GM12878 (cell line): ENCODE measurements at regions of chr10 and their contacts with region 1.

Region 1: GRCh38 chr10:74831518-74832120 is 5.2 kb downstream of the KAT6B start:
- DNase-seq: no peak
- ATAC-seq: no peak
- H3K4me3 ChIP-seq: peak overlapping the region; percentile 41; the same call in 1 of the 2 replicates
- H3K27ac ChIP-seq: peak overlapping the region; percentile 58
- H3K4me1 ChIP-seq: peaks cover 21% of the 10 kb centered on the region
- H3K27me3 ChIP-seq: no peaks in the 10 kb centered on the region
- CTCF ChIP-seq: no peak
- EP300 ChIP-seq: no peak
- POLR2A ChIP-seq: no peak
- RAD21 ChIP-seq: no peak

Region 2: GRCh38 chr10:74842301-74842954 is 10.8 kb after region 1 on chr10:
- CTCF ChIA-PET with region 1: interaction called, 4 read pairs
- POLR2A ChIA-PET with region 1: interaction called, 4 read pairs
- RAD21 ChIA-PET with region 1: no interaction called
- SMC1A ChIA-PET with region 1: interaction called, 24 read pairs
- in situ Hi-C with region 1: no loop called
- intact Hi-C with region 1: no loop called
- DNase-seq: no peak
- ATAC-seq: peak; percentile 68
- H3K4me3 ChIP-seq: no peak overlapping the region
- H3K27ac ChIP-seq: no peak overlapping the region
- H3K4me1 ChIP-seq: no peaks in the 10 kb centered on the region
- H3K27me3 ChIP-seq: no peaks in the 10 kb centered on the region
- CTCF ChIP-seq: no peak
- EP300 ChIP-seq: no peak
- POLR2A ChIP-seq: no peak
- RAD21 ChIP-seq: no peak

Region 3: DNA sequence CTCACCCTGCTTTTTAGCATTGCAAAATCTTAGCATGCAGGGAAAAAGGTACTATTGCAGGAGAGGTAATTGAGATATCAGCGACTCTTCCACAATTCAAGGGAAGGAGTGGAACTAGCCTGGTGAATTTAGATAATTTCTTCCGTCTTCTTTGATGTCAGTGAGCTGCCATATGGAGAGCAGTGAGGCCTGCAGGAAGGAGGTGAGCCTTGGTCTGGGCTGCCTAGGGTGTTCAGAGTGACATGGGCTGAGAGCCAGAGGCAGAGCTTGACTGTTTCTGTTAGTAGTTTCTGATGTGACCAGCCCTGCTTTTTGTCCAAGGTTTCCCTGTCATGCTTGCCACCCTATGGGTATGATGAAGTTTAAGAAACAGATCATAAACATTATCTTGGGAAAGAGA is 23.4 kb after region 1 on chr10:
- CTCF ChIA-PET with region 1: interaction called, 3 read pairs
- POLR2A ChIA-PET with region 1: interaction called, 13 read pairs
- RAD21 ChIA-PET with region 1: interaction called, 18 read pairs
- SMC1A ChIA-PET with region 1: interaction called, 34 read pairs
- in situ Hi-C with region 1: no loop called
- intact Hi-C with region 1: no loop called
- DNase-seq: no peak
- ATAC-seq: peak; percentile 83
- H3K4me3 ChIP-seq: peak overlapping the region; percentile 22; the same call in 1 of the 2 replicates
- H3K27ac ChIP-seq: peak overlapping the region; percentile 82
- H3K4me1 ChIP-seq: peaks cover 19% of the 10 kb centered on the region
- H3K27me3 ChIP-seq: no peaks in the 10 kb centered on the region
- CTCF ChIP-seq: no peak
- EP300 ChIP-seq: no peak
- POLR2A ChIP-seq: 0 out of 2 replicates have a peak, but pooled peaks have one; percentile 20
- RAD21 ChIP-seq: no peak